Gastrocnemius medialis (tissue), 4 donors: ENCODE measurements at regions of chr6 and their contacts with region 1.

Region 1: DNA sequence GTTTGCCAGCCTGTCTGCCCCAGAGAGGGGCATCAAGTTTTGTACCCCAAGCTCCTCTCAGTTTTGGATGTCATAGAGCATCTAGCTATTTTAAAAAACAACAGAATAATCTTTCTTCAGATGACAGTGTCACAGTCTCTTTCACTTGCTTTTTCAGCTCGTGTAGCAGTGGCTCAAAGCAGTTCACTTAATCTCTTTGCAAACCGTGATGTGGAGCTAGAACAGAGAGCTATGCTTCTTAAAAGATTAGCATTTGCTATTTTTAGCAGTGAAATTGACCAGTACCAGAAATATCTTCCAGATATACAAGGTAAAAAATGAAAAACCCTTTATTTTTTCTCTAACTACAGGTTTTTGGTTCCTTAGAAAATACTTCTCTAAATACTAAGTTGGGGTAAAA is 37.3 kb downstream of the PGM3 start:
- DNase-seq: no peak
- ATAC-seq: no peak
- H3K4me3 ChIP-seq: no peak overlapping the region
- H3K27ac ChIP-seq: no peak overlapping the region
- H3K4me1 ChIP-seq: no peaks in the 10 kb centered on the region
- H3K27me3 ChIP-seq: no peaks in the 10 kb centered on the region
- CTCF ChIP-seq: no peak
- POLR2A ChIP-seq: no peak

Region 2: GRCh38 chr6:83119742-83120300 is 36.0 kb before region 1 on chr6:
- in situ Hi-C with region 1: no loop called
- intact Hi-C with region 1: loop called (anchors 5 kb)
- DNase-seq: no peak
- ATAC-seq: no peak
- H3K4me3 ChIP-seq: no peak overlapping the region
- H3K27ac ChIP-seq: no peak overlapping the region
- H3K4me1 ChIP-seq: no peaks in the 10 kb centered on the region
- H3K27me3 ChIP-seq: no peaks in the 10 kb centered on the region
- CTCF ChIP-seq: no peak
- POLR2A ChIP-seq: no peak

Region 3: GRCh38 chr6:83176246-83176645 is 20.5 kb after region 1 on chr6:
- in situ Hi-C with region 1: no loop called
- intact Hi-C with region 1: no loop called
- DNase-seq: no peak
- ATAC-seq: no peak
- H3K4me3 ChIP-seq: no peak overlapping the region
- H3K27ac ChIP-seq: no peak overlapping the region
- H3K4me1 ChIP-seq: no peaks in the 10 kb centered on the region
- H3K27me3 ChIP-seq: no peaks in the 10 kb centered on the region
- CTCF ChIP-seq: no peak
- POLR2A ChIP-seq: no peak

Region 4: DNA sequence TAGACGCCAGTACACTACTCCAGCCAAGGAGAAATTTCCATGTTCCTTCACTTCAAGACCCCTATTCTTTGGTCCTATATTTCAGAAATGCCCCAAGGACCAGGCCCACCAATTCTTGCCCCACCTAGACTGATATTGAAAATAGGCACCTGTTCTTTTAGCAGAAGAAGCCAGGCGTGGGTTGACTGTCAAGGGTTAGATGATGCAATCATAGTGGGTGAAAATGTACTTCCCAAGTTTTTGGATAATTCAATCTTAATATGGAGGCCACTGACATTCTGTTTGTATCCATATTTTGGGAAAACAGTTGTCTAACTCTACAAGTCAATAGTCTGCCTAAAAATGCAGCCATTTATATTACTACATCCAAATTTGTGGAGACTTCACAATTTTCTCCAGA is 574.1 kb after region 1 on chr6:
- in situ Hi-C with region 1: no loop called
- intact Hi-C with region 1: no loop called
- DNase-seq: no peak
- ATAC-seq: no peak
- H3K4me3 ChIP-seq: no peak overlapping the region
- H3K27ac ChIP-seq: no peak overlapping the region
- H3K4me1 ChIP-seq: no peaks in the 10 kb centered on the region
- H3K27me3 ChIP-seq: no peaks in the 10 kb centered on the region
- CTCF ChIP-seq: no peak
- POLR2A ChIP-seq: no peak

Region 5: DNA sequence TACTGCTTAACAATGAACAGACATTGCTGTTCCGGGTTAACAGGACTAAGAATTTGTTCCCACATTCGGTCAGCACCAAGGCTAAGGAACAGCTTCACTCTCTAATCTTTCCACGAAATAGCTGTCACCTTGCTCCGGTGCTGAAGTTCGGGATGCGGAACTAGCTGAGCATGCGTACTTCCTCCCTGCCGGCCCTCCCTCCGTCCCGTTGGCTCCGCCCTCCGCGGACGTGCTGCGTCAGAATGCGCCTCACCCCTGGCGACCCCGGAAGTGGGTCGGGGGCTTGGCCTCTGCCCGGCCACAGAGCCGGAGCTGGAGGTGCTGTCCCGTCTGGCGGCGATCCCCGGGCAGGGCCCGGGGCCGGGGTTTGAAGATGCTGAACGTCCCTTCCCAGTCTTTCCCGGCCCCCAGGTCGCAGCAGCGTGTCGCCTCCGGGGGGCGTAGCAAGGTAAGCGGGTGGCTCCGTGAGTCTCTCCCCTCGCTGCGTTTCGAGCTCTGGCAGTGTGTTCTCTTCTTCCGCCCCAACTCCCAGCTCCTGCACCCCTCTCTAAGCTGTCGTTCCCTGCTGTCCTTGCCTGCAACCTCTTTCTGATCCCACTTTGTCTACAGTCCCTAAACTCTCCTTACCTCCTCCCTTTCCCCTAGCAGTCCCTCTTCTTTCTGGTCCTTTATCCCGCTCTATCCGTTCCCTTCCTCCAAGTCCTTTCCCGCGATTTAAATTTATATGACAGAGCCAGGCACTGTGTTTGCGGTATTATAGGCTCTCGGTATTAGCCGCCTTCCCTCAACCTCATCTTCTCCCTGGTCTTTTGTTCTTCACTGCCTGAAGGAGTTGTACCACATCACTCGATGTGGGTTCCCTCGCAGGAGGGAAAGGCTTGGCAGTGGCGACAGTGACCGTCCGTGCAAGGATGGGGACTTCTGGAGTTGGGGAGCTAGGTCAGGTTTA is 703.9 kb after region 1 on chr6 and contains the start of gene CYB5R4:
- in situ Hi-C with region 1: no loop called
- intact Hi-C with region 1: no loop called
- DNase-seq: peak; percentile 85 to 89
- ATAC-seq: peak; percentile 99
- H3K4me3 ChIP-seq: peak within 1 kb of the TSS; percentile 88 to 93 (median 90)
- H3K27ac ChIP-seq: peak within 1 kb of the TSS; percentile 84 to 91 (median 89)
- H3K4me1 ChIP-seq: peaks cover 16 to 20% of the 10 kb centered on the region in 2 donors
- H3K27me3 ChIP-seq: peaks cover 0 to 5% (median 2%) of the 10 kb centered on the region in 3 donors
- CTCF ChIP-seq: peak in 4 of 5 experiments; percentile 23 to 52 (median 36)
- POLR2A ChIP-seq: peak; percentile 68 to 82
- total RNA-seq, gene CYB5R4: 8.5 to 13.2 (median 10.2) TPM